ENCODE measurements at regions of chr2 and their contacts with region 1.

Region 1: DNA sequence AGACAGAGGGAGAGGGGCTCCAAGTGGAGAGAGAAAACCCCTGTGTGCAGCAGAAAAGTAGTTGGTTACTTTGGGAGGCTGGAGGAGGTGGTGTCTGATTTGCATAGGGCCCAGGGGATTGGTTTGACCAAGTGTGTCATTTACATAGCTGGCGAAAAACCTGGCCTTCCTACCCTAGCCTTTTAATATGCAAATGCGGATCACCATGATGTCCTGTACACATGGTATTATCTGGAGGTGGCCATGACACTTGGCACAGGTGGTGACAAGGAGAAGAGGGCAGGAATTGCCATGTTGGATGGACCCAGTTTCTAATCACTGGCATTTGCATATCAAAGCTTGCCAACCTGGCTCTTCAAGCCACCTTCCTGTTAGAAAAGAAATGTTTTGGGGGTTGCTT is 120.8 kb upstream of the CHAC2 start:
- DNase-seq: no peak
- ATAC-seq: no peak
- H3K4me3 ChIP-seq: no peak overlapping the region
- H3K27ac ChIP-seq: no peak overlapping the region
- H3K4me1 ChIP-seq: no peaks in the 10 kb centered on the region
- CTCF ChIP-seq: no peak
- EP300 ChIP-seq: no peak
- POLR2A ChIP-seq: no peak
- RAD21 ChIP-seq: no peak

Region 2: DNA sequence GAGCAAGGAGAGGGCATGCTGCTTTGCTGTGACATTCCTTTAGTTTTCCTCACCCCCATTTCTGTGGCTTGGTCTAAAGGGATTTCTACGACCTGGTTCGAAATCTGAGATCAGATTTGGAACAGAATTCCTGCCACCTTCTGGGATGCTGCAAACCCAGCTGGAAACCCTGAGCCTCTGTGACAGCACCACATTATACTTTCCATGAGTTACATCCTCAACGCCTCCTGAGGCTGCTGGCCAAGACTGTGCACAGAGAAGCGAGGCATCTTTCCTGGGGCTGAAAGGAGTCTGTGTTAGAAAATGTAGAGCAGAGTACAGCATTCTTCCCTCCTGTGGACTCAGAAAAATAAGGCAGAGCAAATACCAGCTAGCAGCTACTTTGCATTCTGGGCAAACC is 17.3 kb before region 1 on chr2:
- CTCF ChIA-PET with region 1: interaction called, 14 read pairs
- POLR2A ChIA-PET with region 1: no interaction called
- DNase-seq: no peak
- ATAC-seq: no peak
- H3K4me3 ChIP-seq: no peak overlapping the region
- H3K27ac ChIP-seq: no peak overlapping the region
- H3K4me1 ChIP-seq: no peaks in the 10 kb centered on the region
- CTCF ChIP-seq: no peak
- EP300 ChIP-seq: no peak
- POLR2A ChIP-seq: no peak
- RAD21 ChIP-seq: no peak

Region 3: DNA sequence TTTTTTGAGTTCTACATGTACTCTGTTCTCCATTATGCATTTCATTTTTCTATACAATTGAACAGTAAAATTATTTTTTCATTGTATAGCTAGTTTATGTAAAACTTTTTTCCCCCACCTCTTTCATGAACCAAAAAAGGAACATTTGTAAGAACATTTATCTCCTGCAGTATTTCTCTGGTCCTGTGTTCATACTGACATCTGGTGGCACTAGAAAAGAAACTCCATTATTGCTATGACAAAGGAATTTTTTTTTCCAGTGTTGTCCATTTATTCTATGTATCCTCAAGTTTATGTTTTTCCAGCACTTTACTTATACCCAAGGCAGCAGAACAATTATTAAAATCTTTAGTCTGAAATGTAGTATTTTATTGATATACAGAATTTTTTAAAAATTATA is 93.4 kb after region 1 on chr2:
- CTCF ChIA-PET with region 1: no interaction called
- POLR2A ChIA-PET with region 1: no interaction called
- DNase-seq: peak in 1 of 2 experiments; percentile 46
- ATAC-seq: peak in 1 of 2 experiments; percentile 51; a peak in 2 of 6 replicates
- H3K4me3 ChIP-seq: no peak overlapping the region
- H3K27ac ChIP-seq: no peak overlapping the region
- H3K4me1 ChIP-seq: no peaks in the 10 kb centered on the region
- CTCF ChIP-seq: peak; percentile 75
- EP300 ChIP-seq: no peak
- POLR2A ChIP-seq: no peak
- RAD21 ChIP-seq: peak; percentile 70 to 74